ENCODE measurements at regions of chr17 and their contacts with region 1.

Region 1: GRCh38 chr17:78128551-78129350 is at the start of gene TMC6:
- DNase-seq: no peak
- H3K4me3 ChIP-seq: peak within 1 kb of the TSS; percentile 58 to 78
- H3K27ac ChIP-seq: peak within 1 kb of the TSS; percentile 79
- H3K4me1 ChIP-seq: peaks cover 85% of the 10 kb centered on the region
- H3K27me3 ChIP-seq: no peaks in the 10 kb centered on the region
- CTCF ChIP-seq: no peak
- POLR2A ChIP-seq: no peak
- total RNA-seq, gene TMC6: 64.8 TPM

Region 2: GRCh38 chr17:78104540-78104941 is 24.2 kb before region 1 on chr17:
- intact Hi-C with region 1: no loop called
- DNase-seq: no peak
- H3K4me3 ChIP-seq: no peak overlapping the region
- H3K27ac ChIP-seq: no peak overlapping the region
- H3K4me1 ChIP-seq: no peaks in the 10 kb centered on the region
- H3K27me3 ChIP-seq: no peaks in the 10 kb centered on the region
- CTCF ChIP-seq: no peak
- POLR2A ChIP-seq: no peak

Region 3: GRCh38 chr17:78176548-78177025 is 47.8 kb after region 1 on chr17:
- intact Hi-C with region 1: loop called (anchors 5 kb)
- DNase-seq: no peak
- H3K4me3 ChIP-seq: no peak overlapping the region
- H3K27ac ChIP-seq: no peak overlapping the region
- H3K4me1 ChIP-seq: peaks cover 55% of the 10 kb centered on the region
- H3K27me3 ChIP-seq: no peaks in the 10 kb centered on the region
- CTCF ChIP-seq: peak; percentile 66 to 95 (median 70)
- POLR2A ChIP-seq: no peak

Measured in vagina (tissue), 2 donors.